Activated T-helper 2 cell treated with anti-CD3 and anti-CD28 coated beads, Interferon-gamma antibody, Interleukin-2, Interleukin-4, amounts not matched to agents 10 μg/mL and 5 μg/mL and 100 μg/mL, durations not matched to agents 14 hours and 24 hours and 36 hours (primary cell): ENCODE measurements at regions of chr1 and their contacts with region 1.

Region 1: DNA sequence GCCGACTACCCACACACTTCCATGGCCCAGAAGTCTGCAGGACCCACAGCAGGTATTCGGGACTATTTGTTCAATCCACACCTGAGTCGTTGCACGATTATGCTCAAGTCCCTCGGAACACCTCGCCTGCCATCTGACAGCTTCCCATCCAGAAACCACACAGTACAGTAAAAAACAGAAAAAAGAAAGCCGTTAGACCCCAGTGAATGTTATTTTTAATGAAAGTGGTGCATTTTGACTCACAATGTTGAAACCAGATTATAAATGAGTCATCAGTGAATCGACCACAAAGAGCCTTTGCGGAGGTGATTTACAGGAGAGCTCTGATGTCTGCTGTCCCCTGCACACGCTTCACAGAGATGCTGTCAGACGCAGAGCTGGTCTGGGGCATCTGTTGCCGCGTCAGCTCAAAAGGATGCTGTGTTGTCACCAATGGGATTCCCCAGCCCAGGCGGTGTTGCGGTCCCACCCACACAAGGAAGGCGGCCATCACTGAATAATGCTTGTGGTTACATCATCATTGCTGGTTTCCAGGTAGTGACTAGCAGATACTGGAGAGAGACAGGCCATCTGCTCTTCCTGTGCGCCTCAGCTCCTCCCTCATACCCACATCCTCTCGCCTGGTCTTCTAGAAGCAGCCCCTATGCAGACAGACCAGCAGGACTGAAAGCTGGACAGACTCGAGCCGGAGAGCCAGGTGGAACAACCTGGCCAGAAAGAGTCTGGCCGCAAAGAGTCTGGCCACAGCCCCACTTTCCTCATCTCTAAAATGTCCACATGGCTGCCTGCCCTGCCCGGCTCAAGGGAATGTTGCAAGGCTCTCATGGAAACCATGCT is 116.8 kb downstream of the TOMM20 start:
- DNase-seq: peak; percentile 97
- H3K4me3 Mint-ChIP-seq: peak overlapping the region; percentile 57
- H3K27ac Mint-ChIP-seq: peak overlapping the region; percentile 100
- H3K4me1 Mint-ChIP-seq: peaks cover 86% of the 10 kb centered on the region
- H3K27me3 Mint-ChIP-seq: no peaks in the 10 kb centered on the region

Region 2: DNA sequence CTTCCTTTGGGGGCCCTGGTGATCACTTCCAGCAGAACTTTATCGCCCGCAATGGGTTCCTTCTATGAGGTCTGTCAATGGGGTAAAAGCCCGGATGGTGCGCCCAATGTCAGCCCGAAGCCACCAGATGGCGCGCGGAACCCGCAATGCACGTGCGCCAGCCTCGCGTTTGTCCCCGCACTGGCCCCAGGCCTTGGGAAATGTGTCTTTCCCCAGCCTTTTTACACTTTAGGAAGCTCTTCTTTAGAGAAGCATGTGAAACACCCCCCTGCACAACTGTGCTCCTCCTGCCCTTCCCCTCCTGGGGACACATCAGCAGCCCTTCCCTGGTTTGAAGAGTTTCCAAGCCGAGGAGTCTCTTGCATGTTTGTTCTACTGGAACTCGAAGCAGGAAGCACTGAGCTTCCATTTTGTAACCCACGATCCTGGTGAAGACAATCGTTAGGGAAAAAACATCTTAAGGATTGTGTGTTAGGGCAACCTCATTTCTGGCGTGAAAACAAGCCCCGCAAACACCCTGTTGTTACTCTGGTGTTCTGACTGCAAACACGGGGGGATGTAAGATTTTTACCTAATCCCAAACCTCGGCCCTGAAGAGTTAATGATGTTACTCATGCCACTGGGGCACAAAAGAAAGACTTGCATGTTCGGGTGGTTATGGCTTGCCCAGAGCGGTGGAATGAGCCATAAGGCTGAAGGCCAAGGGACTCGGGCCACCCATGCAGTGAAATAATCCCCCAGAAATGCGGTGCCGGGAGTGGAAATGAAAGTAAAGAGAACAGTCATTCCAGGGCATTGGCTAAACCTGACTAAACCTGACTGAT is 512.5 kb before region 1 on chr1:
- intact Hi-C with region 1: loop called (anchors 1 kb)
- DNase-seq: peak; percentile 81
- H3K4me3 Mint-ChIP-seq: peak overlapping the region; percentile 11
- H3K27ac Mint-ChIP-seq: peak overlapping the region; percentile 93
- H3K4me1 Mint-ChIP-seq: peaks cover 80% of the 10 kb centered on the region
- H3K27me3 Mint-ChIP-seq: no peaks in the 10 kb centered on the region

Region 3: DNA sequence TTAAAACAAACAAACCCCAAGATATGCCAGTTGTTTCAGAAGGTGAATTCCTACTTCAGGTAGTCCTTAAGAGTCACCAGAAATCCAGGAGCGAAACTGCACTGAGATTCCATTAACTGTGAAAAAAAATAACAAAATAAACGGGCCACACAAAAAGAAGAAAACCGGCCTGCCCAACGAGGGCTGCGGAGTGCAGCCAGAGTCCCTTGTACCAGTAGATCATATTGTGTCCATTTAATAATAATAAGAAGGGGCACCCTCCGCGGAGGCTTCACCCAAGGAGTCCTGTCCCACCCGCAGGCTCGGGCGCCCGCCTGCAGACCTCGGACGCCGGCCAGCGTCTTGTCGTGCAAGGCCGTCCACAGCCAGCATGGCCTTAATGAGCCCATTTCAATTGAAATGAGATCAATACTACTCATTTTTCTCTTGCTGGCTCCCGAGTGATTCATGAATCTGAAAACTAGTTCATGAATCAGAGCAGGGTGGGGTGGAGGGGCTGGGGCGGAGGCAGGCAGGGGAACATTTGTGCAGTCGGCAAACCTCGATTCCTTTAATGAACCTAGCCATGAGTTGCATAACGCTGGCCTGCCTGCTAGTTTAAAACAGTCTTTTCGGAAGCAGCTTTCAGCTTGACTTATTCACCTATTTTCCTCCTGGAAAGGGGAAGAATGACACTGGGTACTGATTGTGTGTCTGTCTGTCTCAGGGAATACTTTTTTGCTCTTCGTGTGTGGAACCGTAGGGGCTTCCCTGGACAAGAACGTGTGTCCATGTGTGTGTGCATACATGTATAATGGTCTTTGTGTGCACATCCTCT is 288.7 kb before region 1 on chr1:
- intact Hi-C with region 1: loop called (anchors 1 kb)
- DNase-seq: peak; percentile 26
- H3K4me3 Mint-ChIP-seq: peak overlapping the region; percentile 72
- H3K27ac Mint-ChIP-seq: peak overlapping the region; percentile 99
- H3K4me1 Mint-ChIP-seq: peaks cover 73% of the 10 kb centered on the region
- H3K27me3 Mint-ChIP-seq: no peaks in the 10 kb centered on the region

Region 4: GRCh38 chr1:234875953-234876855 is 135.6 kb before region 1 on chr1:
- intact Hi-C with region 1: loop called (anchors 1 kb)
- DNase-seq: no peak
- H3K4me3 Mint-ChIP-seq: no peak overlapping the region
- H3K27ac Mint-ChIP-seq: peak overlapping the region; percentile 88
- H3K4me1 Mint-ChIP-seq: peaks cover 63% of the 10 kb centered on the region
- H3K27me3 Mint-ChIP-seq: no peaks in the 10 kb centered on the region

Region 5: DNA sequence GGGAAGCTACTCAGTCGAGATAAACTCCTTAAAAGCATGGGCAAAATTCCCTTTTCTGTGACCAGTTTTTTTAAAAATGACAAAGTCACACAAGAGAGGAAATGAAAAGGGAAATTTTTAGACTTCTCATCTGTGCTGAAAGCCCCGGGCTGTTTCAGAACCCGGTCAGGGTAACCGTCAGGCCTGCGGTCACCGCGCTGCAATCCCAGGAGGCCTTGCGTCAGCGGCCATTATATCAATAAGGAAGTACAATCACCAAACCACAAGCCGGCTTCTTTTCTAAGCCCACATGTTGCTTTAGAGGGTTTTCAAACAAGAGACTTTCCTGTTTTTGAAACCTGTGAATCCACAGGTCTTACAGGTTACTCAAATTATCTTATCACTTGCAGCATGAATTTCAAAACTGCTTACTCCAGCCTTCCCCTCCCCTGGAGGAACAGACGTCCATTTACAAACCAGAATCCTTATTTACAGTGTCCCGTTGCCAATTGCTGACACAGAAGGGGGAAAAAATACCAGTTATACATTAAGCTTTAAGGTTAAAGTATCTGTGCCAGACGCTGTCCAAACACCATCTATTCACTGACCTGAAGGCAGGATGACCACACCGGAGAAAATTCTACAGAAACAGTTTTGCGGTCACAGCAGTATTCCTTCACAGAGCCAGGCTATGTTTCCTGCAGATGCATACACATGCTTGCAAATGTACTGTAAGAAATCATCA is 48.5 kb before region 1 on chr1:
- intact Hi-C with region 1: loop called (anchors 1 kb)
- DNase-seq: peak; percentile 87
- H3K4me3 Mint-ChIP-seq: peak overlapping the region; percentile 62
- H3K27ac Mint-ChIP-seq: peak overlapping the region; percentile 93
- H3K4me1 Mint-ChIP-seq: peaks cover 70% of the 10 kb centered on the region
- H3K27me3 Mint-ChIP-seq: no peaks in the 10 kb centered on the region

Region 6: DNA sequence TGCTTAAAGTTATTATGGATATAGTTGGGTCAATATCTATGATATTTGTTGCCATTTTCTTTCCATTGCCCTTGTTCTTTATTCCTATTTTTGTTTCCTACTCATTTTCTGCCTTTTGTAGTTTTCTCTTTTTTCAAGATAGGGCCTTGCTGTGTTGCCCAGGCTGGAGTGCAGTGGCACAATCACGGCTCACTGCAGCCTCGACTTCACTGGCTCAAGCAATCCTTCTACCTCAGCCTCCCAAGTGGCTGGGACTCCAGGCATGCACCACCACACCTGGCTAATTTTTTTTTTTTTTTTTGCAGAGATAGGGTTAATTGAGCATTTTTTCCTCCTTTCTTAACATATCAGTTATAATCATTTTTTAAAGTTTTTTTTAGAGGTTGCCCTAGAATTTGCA is 24.1 kb after region 1 on chr1:
- intact Hi-C with region 1: no loop called
- DNase-seq: no peak
- H3K4me3 Mint-ChIP-seq: no peak overlapping the region
- H3K27ac Mint-ChIP-seq: no peak overlapping the region
- H3K4me1 Mint-ChIP-seq: peaks cover 13% of the 10 kb centered on the region
- H3K27me3 Mint-ChIP-seq: no peaks in the 10 kb centered on the region

Region 7: DNA sequence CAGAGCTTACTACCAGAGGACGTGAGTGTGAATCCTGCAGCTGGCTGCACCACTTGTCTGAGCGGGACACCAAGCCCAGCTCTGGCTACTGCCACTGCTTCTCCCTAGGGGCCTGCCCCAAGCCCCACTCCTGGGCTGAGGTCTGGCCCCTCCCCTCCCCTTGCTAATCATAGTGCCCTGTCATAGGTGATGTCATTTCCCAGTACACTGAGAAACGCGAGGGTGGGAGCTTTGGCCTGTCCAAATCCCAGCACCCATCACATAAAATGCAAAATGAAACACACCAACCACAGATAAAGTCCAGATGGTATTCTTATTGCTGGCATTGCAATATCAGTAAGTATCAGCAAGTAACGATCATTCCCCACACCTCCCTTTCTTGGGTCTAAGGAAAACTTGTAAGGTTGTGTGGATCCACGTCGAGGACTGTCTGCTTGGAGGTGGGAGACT is 39.1 kb after region 1 on chr1:
- intact Hi-C with region 1: loop called (anchors 1 kb)
- DNase-seq: no peak
- H3K4me3 Mint-ChIP-seq: no peak overlapping the region
- H3K27ac Mint-ChIP-seq: peak overlapping the region; percentile 88
- H3K4me1 Mint-ChIP-seq: peaks cover 50% of the 10 kb centered on the region
- H3K27me3 Mint-ChIP-seq: no peaks in the 10 kb centered on the region